Mammary epithelial cell (primary cell): ENCODE measurements at regions of chr1 and their contacts with region 1.

Region 1: GRCh38 chr1:235946571-235946981 is 79.9 kb upstream of the LYST start:
- DNase-seq: peak; percentile 45
- H3K4me3 ChIP-seq: no peak overlapping the region
- H3K27ac ChIP-seq: no peak overlapping the region
- H3K4me1 ChIP-seq: peaks cover 32% of the 10 kb centered on the region
- H3K27me3 ChIP-seq: no peaks in the 10 kb centered on the region
- CTCF ChIP-seq: peak in 1 of 2 donors; percentile 51

Region 2: GRCh38 chr1:235908742-235909520 is 37.6 kb before region 1 on chr1:
- CTCF ChIA-PET with region 1: no interaction called
- dilution Hi-C with region 1: no loop called
- in situ Hi-C with region 1: no loop called
- intact Hi-C with region 1: loop called (anchors 1 kb)
- DNase-seq: peak; percentile 99
- H3K4me3 ChIP-seq: peak overlapping the region; percentile 3 to 25 (median 24)
- H3K27ac ChIP-seq: peak overlapping the region; percentile 99
- H3K4me1 ChIP-seq: peaks cover 49% of the 10 kb centered on the region
- H3K27me3 ChIP-seq: no peaks in the 10 kb centered on the region
- CTCF ChIP-seq: peak in 1 of 2 donors; percentile 3